Lower leg skin (tissue), 4 donors: ENCODE measurements at regions of chr14 and their contacts with region 1.

Region 1: DNA sequence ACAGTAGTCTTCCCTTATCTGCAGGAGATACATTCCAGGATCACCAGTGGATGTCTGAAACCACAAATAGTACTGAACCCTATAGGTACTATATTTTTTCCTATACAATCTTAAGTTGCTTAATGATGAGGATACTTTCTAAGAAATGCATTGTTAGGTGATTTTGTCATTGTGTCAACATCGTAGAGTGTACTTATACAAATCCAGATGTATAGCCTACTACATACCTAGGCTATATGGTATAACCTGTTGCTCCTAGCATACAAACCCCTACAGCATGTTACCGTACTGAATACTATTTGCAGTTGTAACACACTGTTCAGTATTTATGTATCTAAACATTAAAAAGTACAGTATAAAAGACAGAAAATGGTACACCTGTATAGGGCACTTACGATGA is 165.9 kb downstream of the SLC35F4 start:
- DNase-seq: no peak
- H3K4me3 ChIP-seq: no peak overlapping the region
- CTCF ChIP-seq: no peak
- POLR2A ChIP-seq: no peak

Region 2: GRCh38 chr14:57302883-57303282 is 397.1 kb before region 1 on chr14:
- intact Hi-C with region 1: loop called (anchors 5 kb)
- DNase-seq: no peak
- H3K4me3 ChIP-seq: no peak overlapping the region
- CTCF ChIP-seq: no peak
- POLR2A ChIP-seq: no peak